Activated T-helper 1 cell treated with anti-CD3 and anti-CD28 coated beads, Interleukin-12 subunit alpha, Interleukin-12 subunit beta, Interleukin-2, Interleukin-4 antibody, amounts not matched to agents 30 ng/mL and 10 ng/mL and 1 ng/mL, durations not matched to agents 14 hours and 24 hours and 36 hours (primary cell): ENCODE measurements at regions of chr6 and their contacts with region 1.

Region 1: DNA sequence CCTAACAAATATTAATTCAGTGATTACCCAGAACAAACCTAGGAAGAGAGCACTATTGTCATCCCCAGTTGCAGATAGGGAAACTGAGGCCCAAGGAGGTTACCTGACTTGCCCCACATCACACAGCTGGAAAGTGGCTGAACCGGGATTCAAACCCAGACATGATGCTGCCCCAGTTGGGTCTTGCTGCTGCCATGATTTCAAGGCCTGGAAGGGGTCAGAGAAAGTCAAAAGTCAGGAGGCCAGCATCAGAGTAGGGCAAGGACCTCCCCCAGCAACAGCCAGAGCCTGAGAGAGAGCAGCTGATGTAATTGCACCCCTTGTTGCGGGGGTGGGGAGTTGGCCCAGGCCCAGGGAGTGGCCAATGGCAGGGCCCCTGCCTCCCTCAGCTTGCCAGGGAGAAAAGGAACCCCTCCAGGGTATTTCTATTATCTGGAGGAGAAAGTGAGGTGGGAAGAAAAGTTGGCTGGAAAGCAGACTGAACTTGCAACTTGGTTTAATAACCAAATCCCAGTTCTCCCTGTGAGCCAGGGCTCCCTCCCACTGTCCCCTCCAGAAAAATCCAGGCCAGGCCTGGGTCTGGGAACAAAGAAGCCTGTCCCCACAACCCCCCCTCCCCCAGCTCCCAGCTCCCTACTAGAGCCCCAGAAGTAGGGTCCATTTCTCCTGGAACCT is 83.6 kb downstream of the MRPL14 start:
- DNase-seq: no peak
- H3K4me3 Mint-ChIP-seq: no peak overlapping the region
- H3K27ac Mint-ChIP-seq: no peak overlapping the region
- H3K4me1 Mint-ChIP-seq: peaks cover under 1% of the 10 kb centered on the region
- H3K27me3 Mint-ChIP-seq: no peaks in the 10 kb centered on the region

Region 2: GRCh38 chr6:44058617-44059358 is 15.2 kb after region 1 on chr6:
- intact Hi-C with region 1: loop called (anchors 2 kb)
- DNase-seq: no peak
- H3K4me3 Mint-ChIP-seq: no peak overlapping the region
- H3K27ac Mint-ChIP-seq: no peak overlapping the region
- H3K4me1 Mint-ChIP-seq: peaks cover 22% of the 10 kb centered on the region
- H3K27me3 Mint-ChIP-seq: peaks cover 5% of the 10 kb centered on the region

Region 3: GRCh38 chr6:44074439-44075136 is 31.0 kb after region 1 on chr6:
- intact Hi-C with region 1: no loop called
- DNase-seq: peak; percentile 51
- H3K4me3 Mint-ChIP-seq: peak overlapping the region; percentile 77
- H3K27ac Mint-ChIP-seq: peak overlapping the region; percentile 30
- H3K4me1 Mint-ChIP-seq: peaks cover 38% of the 10 kb centered on the region
- H3K27me3 Mint-ChIP-seq: peaks cover 17% of the 10 kb centered on the region